ENCODE measurements at regions of chr2 and their contacts with region 1.

Region 1: DNA sequence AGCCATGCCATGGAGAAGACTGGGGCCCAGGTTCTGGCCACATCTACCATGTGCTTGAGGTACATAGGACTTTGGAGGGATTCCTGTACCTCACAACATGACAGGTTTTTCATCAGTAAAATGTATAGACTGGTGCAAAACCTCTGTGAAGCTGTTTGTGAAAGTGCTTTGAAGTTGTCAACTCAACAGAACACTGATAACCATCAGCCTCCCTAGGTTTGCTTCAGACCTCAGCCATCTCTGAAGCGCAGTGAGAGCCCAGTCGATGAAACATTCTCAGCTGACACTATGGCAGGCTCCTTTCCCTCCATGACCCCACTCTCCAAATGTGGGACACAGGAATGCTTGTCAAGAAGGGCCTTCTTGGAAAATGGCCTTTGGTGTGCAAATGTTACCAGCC is 38.6 kb downstream of the STK25 start:
- DNase-seq: no peak
- ATAC-seq: no peak

Region 2: DNA sequence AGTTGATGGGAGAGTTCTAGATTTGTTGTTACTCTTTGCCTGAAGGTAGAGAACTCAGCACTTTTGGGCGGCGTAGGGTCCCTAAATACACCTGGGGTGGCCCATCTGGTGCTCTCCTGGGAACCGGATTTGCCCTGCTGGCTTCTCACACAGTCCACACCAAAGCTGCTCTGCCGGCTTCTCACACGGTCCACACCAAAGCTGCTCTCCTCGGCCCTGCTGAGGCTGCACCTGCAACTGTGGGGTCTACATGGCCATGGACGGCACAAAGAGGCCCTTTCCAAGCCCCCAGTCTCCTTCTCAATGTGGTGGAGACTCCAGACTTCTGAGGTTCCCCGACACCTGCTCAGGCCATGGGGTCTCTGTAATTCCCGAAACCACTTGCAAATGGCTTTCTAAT is 1159.1 kb before region 1 on chr2:
- intact Hi-C with region 1: loop called (anchors 5 kb)
- DNase-seq: peak; percentile 35
- ATAC-seq: no peak

Region 3: GRCh38 chr2:240622531-240623235 is 847.1 kb before region 1 on chr2:
- intact Hi-C with region 1: no loop called
- DNase-seq: peak; percentile 60
- ATAC-seq: peak; percentile 52